CD4-positive, alpha-beta T cell (primary cell): ENCODE measurements at regions of chr9 and their contacts with region 1.

Region 1: DNA sequence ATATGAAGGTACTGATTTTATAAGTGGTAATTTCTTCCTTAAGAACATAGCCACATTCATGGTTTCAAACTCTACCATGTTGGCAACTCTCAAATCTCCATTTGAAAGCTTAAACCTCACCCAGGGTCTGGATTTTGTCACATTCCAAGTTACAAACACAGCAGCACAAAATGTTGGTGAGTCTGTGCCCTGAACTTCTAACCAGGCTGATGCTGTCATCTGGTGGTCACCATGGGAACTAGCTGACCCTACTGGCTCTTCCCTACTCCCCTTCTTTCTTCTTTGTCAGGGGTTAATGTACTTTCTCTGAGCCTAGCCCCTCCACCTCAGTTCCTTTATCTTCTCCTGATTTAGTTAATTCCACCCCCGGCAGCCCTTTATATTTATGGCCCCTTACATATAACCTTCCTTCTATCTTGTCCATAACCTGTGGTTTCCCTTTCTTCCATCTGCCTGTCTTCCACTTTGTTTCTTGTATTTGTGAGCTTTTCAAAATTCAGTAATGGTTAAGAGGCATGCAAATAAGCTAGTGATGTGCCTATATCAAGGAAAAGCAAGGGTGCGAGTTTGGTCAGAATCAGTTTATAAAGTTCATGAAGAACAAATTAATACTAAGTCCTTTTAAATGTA is 35.9 kb downstream of the TGFBR1 start:
- DNase-seq: peak; percentile 25 to 81 (median 44)
- ATAC-seq: peak; percentile 94
- H3K4me3 ChIP-seq: no peak overlapping the region
- H3K4me3 Mint-ChIP-seq: peak overlapping the region; percentile 0
- H3K27ac ChIP-seq: no peak overlapping the region
- H3K27ac Mint-ChIP-seq: peak overlapping the region; percentile 61
- H3K4me1 ChIP-seq: peaks cover 4% of the 10 kb centered on the region
- H3K4me1 Mint-ChIP-seq: peaks cover 42% of the 10 kb centered on the region
- H3K27me3 ChIP-seq: no peaks in the 10 kb centered on the region
- H3K27me3 Mint-ChIP-seq: no peaks in the 10 kb centered on the region
- CTCF ChIP-seq: peak; percentile 95

Region 2: GRCh38 chr9:98807070-98807810 is 333.6 kb before region 1 on chr9 and contains the start of gene GALNT12:
- CTCF ChIA-PET with region 1: no interaction called
- POLR2A ChIA-PET with region 1: no interaction called
- intact Hi-C with region 1: loop called in 1 of 2 experiments (anchors 10 kb)
- DNase-seq: peak in 13 of 14 experiments; percentile 26 to 77 (median 54)
- ATAC-seq: peak; percentile 83
- H3K4me3 ChIP-seq: peak within 1 kb of the TSS; percentile 77
- H3K4me3 Mint-ChIP-seq: peak within 1 kb of the TSS; percentile 94
- H3K27ac ChIP-seq: no peak within 1 kb of the TSS
- H3K27ac Mint-ChIP-seq: peak within 1 kb of the TSS; percentile 39
- H3K4me1 ChIP-seq: peaks cover 20% of the 10 kb centered on the region
- H3K4me1 Mint-ChIP-seq: peaks cover 27% of the 10 kb centered on the region
- H3K27me3 ChIP-seq: peaks cover 4 to 5% of the 10 kb centered on the region in 2 experiments
- H3K27me3 Mint-ChIP-seq: peaks cover 8% of the 10 kb centered on the region
- CTCF ChIP-seq: no peak
- total RNA-seq, gene GALNT12: 8.7 to 11.5 TPM

Region 3: GRCh38 chr9:98974994-98975712 is 165.6 kb before region 1 on chr9:
- CTCF ChIA-PET with region 1: interaction called, 14 read pairs
- POLR2A ChIA-PET with region 1: no interaction called
- intact Hi-C with region 1: loop called (anchors 1 kb)
- DNase-seq: peak; percentile 58 to 87 (median 74)
- ATAC-seq: peak; percentile 99
- H3K4me3 ChIP-seq: peak overlapping the region; percentile 25
- H3K4me3 Mint-ChIP-seq: peak overlapping the region; percentile 28
- H3K27ac ChIP-seq: no peak overlapping the region
- H3K27ac Mint-ChIP-seq: no peak overlapping the region
- H3K4me1 ChIP-seq: peaks cover 9% of the 10 kb centered on the region
- H3K4me1 Mint-ChIP-seq: no peaks in the 10 kb centered on the region
- H3K27me3 ChIP-seq: peaks cover 0 to 6% of the 10 kb centered on the region in 2 experiments
- H3K27me3 Mint-ChIP-seq: peaks cover 10% of the 10 kb centered on the region
- CTCF ChIP-seq: peak; percentile 97

Region 4: GRCh38 chr9:99012942-99013512 is 127.8 kb before region 1 on chr9:
- CTCF ChIA-PET with region 1: interaction called, 14 read pairs
- POLR2A ChIA-PET with region 1: interaction called, 8 read pairs
- intact Hi-C with region 1: no loop called
- DNase-seq: peak in 3 of 14 experiments; percentile 27 to 45 (median 41)
- ATAC-seq: no peak
- H3K4me3 ChIP-seq: no peak overlapping the region
- H3K4me3 Mint-ChIP-seq: no peak overlapping the region
- H3K27ac ChIP-seq: peak overlapping the region in 1 of 2 donors; percentile 5
- H3K27ac Mint-ChIP-seq: peak overlapping the region; percentile 76
- H3K4me1 ChIP-seq: peaks cover 16% of the 10 kb centered on the region
- H3K4me1 Mint-ChIP-seq: peaks cover 28% of the 10 kb centered on the region
- H3K27me3 ChIP-seq: no peaks in the 10 kb centered on the region
- H3K27me3 Mint-ChIP-seq: no peaks in the 10 kb centered on the region
- CTCF ChIP-seq: no peak

Region 5: GRCh38 chr9:99112750-99113413 is 27.9 kb before region 1 on chr9:
- CTCF ChIA-PET with region 1: interaction called, 4 read pairs
- POLR2A ChIA-PET with region 1: interaction called, 73 read pairs
- intact Hi-C with region 1: loop called in 1 of 2 experiments (anchors 1 kb)
- DNase-seq: peak in 13 of 14 experiments; percentile 18 to 88 (median 39)
- ATAC-seq: peak; percentile 95
- H3K4me3 ChIP-seq: peak overlapping the region; percentile 1
- H3K4me3 Mint-ChIP-seq: peak overlapping the region; percentile 71
- H3K27ac ChIP-seq: no peak overlapping the region
- H3K27ac Mint-ChIP-seq: peak overlapping the region; percentile 71
- H3K4me1 ChIP-seq: peaks cover 50% of the 10 kb centered on the region
- H3K4me1 Mint-ChIP-seq: peaks cover 84% of the 10 kb centered on the region
- H3K27me3 ChIP-seq: no peaks in the 10 kb centered on the region
- H3K27me3 Mint-ChIP-seq: no peaks in the 10 kb centered on the region
- CTCF ChIP-seq: no peak

Region 6: DNA sequence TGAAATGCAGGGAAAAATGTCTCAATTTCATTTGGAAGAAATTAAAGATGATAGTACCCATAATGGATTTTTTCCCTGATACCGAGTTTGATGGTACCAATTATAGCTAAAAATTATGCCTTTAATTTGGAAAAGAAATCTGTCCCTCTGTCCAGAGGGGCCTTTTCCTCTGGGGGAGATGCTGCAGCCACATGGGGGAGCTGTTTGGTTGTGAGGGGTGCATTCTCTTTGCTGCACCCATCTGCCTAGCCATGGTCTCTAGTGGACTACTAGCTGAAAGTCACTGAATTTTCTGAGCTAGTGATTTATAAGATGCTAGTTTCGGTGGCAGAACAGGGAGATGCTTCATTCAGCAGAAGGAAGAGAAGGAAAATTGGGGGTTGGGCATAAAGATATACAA is 90.9 kb after region 1 on chr9:
- CTCF ChIA-PET with region 1: no interaction called
- POLR2A ChIA-PET with region 1: no interaction called
- intact Hi-C with region 1: no loop called
- DNase-seq: peak in 3 of 14 experiments; percentile 20 to 39 (median 31)
- ATAC-seq: no peak
- H3K4me3 ChIP-seq: no peak overlapping the region
- H3K4me3 Mint-ChIP-seq: no peak overlapping the region
- H3K27ac ChIP-seq: no peak overlapping the region
- H3K27ac Mint-ChIP-seq: no peak overlapping the region
- H3K4me1 ChIP-seq: peaks cover 1% of the 10 kb centered on the region
- H3K4me1 Mint-ChIP-seq: peaks cover 24% of the 10 kb centered on the region
- H3K27me3 ChIP-seq: no peaks in the 10 kb centered on the region
- H3K27me3 Mint-ChIP-seq: no peaks in the 10 kb centered on the region
- CTCF ChIP-seq: peak; percentile 55

Region 7: GRCh38 chr9:99326112-99326916 is 185.5 kb after region 1 on chr9:
- CTCF ChIA-PET with region 1: no interaction called
- POLR2A ChIA-PET with region 1: no interaction called
- intact Hi-C with region 1: no loop called
- DNase-seq: peak in 3 of 14 experiments; percentile 6 to 15 (median 11)
- ATAC-seq: no peak
- H3K4me3 ChIP-seq: no peak overlapping the region
- H3K4me3 Mint-ChIP-seq: no peak overlapping the region
- H3K27ac ChIP-seq: no peak overlapping the region
- H3K27ac Mint-ChIP-seq: no peak overlapping the region
- H3K4me1 ChIP-seq: no peaks in the 10 kb centered on the region
- H3K4me1 Mint-ChIP-seq: no peaks in the 10 kb centered on the region
- H3K27me3 ChIP-seq: peaks cover 0 to 12% of the 10 kb centered on the region in 2 experiments
- H3K27me3 Mint-ChIP-seq: peaks cover 14% of the 10 kb centered on the region
- CTCF ChIP-seq: no peak